Caki2 (cell line): ENCODE measurements at regions of chr9 and their contacts with region 1.

Region 1: GRCh38 chr9:16335788-16336580 is 534.5 kb downstream of the BNC2 start:
- DNase-seq: peak; percentile 84

Region 2: DNA sequence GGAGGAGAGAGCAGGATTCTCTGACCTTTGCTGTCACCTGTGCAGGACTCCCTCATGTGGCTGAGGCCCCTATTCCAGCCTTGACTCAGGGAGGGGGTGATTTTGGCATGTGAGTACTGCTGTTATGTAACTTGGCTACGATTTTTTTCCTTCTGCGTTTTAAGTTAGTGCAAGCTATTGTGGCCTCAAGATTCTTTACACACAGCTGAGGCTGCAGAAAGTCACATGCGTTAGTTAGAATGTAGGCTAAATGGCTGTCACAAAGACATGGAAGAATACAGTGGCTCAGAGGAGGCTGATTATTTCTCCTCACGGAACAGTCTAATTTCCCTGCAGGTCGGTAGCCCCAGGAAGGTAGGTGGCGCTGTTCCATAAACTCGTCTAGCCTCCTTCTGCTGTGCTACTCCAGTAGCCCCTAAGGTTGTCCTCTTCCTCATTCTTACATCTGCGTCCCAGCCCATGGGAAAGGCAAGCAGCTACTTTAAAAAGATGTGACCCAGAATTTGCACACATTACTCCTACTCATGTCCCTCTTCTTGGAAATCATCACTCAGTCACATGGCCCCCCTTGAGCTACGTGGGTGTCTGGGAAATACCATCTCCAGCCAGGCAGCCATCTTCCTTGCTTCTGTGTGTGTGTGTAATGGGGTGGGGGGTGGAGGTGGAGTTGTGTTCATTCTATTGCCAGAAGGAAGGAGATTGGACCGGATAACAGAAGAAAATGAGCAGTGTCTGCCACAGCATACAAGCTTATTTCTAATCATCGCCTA is 296.6 kb before region 1 on chr9:
- in situ Hi-C with region 1: no loop called
- DNase-seq: peak; percentile 74

Region 3: DNA sequence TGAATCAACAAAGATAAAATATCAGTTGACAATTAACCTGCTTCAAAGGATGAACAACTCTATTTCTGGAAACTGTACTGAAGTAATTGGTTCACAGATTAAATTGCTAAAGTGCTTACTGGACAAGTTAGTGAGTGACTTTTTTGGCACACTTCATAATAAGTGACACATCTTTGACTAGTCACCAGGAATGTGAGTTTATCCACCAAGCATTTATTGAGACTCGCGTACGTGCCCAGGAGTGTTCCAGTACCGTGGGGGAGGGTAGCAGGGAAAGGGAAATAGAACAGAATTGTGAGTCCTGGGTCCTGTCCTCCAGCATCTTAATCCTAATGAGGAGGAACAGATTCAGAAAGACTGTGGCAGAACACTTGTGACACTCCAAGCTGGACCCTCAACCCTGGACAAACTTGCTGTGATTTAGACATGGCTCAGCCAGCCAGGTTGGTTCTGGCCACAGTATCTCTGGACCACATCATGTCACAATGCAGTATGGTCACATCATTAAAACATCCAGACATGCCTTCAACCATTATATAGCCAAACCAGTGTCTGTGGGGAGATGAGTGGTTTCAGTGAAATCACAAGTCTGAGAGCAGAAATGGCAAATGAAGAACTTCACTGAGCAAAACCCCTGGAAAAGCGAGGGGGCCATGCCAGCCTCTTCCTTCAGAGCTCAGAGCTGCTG is 88.7 kb before region 1 on chr9:
- in situ Hi-C with region 1: loop called (anchors 25 kb)
- DNase-seq: peak; percentile 77